Posterior cingulate gyrus (tissue), 11 donors: ENCODE measurements at regions of chr17 and their contacts with region 1.

Region 1: DNA sequence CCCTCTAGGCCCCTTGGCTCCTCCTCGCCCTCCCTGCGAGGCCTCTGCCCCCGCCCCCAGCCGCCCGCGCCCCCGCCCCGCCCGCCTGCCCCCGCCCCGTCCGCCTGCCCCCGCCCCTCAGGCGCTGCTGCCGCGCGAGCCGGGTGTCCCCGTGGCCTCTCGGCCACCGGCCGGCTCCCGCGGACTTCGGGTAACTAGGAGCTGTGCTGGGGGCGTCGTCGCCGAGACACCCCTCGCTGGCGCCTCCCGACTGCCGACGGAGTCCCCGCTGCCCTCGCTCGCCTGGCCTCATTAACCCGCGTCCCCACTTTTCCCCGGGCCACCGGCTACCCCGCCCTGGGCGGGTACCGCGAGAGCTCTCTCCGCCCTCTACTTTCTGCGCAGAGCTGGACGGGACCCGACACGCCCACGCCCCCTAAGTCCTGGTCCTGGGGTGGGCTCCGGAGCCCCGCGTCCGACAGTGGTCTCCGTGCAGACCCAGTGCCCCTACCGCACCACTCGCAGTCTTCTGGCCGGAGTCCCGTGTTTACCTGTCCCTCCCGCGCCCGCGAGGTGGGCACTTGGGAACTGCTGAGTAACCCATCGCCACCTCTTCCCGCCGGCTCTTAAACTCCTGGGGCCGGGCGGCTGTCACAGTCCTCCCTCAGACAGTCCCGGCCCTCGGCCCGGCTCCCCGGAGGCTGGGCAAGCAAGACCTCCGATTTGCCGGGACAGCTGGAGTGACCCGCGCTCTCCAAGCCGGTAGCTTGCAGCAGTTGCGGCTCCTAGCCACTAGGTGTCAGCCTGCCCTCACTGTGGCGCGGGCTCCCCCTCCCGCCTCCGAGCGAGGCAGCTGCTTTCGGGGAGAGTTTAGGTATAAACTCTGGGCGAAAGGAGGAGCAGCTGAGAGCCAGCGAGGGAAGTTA is at the start of gene TLCD1:
- DNase-seq: peak; percentile 89 to 99 (median 94)

Region 2: DNA sequence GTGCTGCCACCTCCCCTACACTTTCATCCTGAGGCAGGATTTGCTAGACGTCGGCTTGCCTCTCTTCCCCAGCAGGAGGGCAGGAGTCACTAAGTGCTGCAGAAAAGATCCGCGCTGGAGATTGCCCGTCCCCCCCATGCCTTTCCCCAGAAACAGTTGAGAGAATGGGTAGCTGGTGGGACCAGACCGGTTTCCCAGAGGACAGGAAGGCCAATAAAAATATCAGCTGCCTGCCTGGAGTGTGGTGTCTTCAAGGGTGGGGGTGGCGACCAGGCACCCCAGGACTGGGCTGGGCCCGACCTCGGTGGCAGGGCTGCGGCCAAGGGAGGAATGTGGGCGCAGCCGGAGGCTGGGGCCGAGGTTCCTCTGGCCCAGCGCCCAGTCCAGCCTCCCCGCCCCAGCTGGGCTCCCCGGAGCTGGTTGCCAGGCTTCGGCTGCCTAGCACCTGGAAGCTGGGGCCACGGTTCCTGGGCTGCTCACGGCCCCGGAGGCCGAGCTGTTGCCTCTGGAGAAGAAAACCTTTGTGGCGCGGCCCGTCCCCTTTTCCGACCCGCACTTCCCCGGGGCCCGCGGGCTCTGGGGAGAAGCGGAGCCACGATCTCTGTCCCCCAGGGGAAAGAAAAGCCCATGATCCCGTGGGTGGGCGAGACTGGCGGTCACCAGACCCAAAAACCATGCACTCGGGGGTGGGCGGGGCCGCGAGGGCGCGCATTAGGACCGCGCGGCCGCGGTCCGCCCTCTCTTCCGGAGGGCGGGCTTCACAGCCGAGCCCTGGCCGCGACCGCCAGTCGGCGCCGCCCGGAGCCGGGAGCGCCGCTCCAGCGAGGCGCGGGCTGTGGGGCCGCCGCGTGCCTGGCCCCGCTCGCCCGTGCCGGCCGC is 17.0 kb after region 1 on chr17 and contains the start of gene TRAF4:
- intact Hi-C with region 1: loop called (anchors 1 kb)
- DNase-seq: peak in 9 of 10 donors; percentile 53 to 94 (median 67)

Region 3: GRCh38 chr17:28750178-28751047 is 23.9 kb after region 1 on chr17:
- intact Hi-C with region 1: loop called (anchors 1 kb)
- DNase-seq: peak; percentile 89 to 99 (median 94)

Region 4: DNA sequence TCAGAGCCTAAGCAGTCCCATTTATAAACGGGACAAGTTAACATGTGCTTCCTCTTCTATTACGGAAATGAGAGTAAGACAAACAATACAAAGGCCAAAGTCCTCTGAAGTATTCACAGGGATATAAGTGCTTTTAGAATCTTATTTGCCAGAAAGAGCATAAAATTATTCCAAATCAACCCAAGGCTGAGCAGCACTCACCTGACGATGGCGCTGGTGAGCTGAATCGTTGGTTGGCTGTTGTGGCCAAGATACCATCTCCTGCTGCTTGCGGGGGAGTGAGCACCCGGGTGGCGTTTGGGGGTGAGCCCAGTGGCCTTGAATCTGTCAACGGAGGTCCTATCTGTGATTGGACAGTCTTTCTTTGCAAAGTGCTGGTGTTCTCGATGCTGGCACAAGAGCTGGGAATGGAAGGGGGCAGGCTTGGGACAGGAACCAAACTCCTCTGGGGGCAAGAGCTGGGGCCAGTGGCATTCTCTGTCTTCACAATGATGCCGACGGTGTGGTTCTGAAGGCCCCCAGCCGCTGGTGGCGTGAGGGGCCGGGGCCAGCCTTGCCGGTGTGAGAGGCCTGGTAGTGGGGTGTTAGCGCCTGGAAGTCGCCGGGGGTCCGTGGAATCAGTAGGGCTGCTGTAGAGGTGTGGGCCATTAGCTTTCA is 185.9 kb after region 1 on chr17:
- intact Hi-C with region 1: loop called (anchors 5 kb)
- DNase-seq: no peak

Region 5: DNA sequence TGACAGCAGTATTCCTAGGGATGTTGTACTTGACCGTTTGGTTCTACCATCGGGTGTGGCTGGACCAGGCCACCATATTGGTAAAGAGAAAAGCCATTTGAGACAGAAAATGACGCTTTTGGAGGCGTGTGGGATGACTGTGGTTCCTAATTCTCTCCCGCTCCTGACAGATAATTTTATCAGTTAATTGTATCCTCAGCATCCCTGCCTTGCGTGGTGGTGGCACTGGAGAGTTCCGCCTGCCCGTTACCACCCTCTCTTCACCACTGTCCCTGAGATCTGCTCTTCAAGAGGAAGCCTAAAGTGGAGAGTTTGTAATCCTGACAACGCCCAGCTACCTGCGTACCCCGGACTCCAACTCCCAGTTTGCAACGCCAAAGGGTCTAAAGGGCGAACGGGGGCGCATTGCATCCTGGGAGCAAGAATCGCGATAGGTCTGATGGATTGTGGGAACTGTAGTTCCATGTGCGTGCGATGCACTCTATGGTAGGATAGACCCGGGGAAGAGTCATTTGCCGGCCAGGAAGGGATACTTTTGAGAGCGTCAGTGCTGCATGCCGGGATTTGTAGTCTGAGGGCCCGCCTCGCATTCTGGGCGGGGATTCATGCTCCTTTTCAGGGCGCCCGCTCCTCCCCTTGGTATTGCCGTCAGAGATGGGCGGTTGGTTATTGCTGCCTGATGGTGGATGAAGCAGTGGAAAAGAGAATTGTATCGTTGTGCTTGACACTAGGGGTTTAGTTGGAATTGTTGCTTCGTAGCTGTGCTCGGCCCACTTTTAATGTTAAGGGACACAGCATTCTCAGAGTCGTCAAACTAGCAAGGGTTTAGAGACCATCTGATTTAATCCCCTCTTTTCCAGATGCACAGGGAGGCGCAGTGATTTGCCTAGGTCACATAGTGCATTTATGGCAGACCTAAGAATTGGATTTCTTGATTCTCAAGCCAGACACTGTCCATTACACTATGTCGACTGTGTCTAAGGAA is 225.8 kb after region 1 on chr17:
- intact Hi-C with region 1: loop called (anchors 2 kb)
- DNase-seq: peak; percentile 96 to 99 (median 98)